PC-9 (cell line): ENCODE measurements at regions of chr19 and their contacts with region 1.

Region 1: GRCh38 chr19:52922841-52923777 is at the start of gene ZNF888:
- DNase-seq: peak; percentile 75 to 91
- H3K4me3 ChIP-seq: peak within 1 kb of the TSS; percentile 96
- H3K27ac ChIP-seq: peak within 1 kb of the TSS; percentile 82
- H3K4me1 ChIP-seq: 0 out of 2 replicates have a peak, but pooled peaks cover 6% of the 10 kb centered on the region
- H3K27me3 ChIP-seq: no peaks in the 10 kb centered on the region
- CTCF ChIP-seq: no peak
- total RNA-seq, gene ZNF888: 10.8 and 14.5 TPM in 2 replicates

Region 2: GRCh38 chr19:52722062-52723003 is 200.8 kb before region 1 on chr19:
- CTCF ChIA-PET with region 1: no interaction called
- POLR2A ChIA-PET with region 1: no interaction called
- intact Hi-C with region 1: no loop called
- DNase-seq: peak; percentile 76 to 96
- H3K4me3 ChIP-seq: no peak overlapping the region
- H3K27ac ChIP-seq: peak overlapping the region; percentile 61
- H3K4me1 ChIP-seq: peaks cover 11% of the 10 kb centered on the region
- H3K27me3 ChIP-seq: no peaks in the 10 kb centered on the region
- CTCF ChIP-seq: no peak

Region 3: DNA sequence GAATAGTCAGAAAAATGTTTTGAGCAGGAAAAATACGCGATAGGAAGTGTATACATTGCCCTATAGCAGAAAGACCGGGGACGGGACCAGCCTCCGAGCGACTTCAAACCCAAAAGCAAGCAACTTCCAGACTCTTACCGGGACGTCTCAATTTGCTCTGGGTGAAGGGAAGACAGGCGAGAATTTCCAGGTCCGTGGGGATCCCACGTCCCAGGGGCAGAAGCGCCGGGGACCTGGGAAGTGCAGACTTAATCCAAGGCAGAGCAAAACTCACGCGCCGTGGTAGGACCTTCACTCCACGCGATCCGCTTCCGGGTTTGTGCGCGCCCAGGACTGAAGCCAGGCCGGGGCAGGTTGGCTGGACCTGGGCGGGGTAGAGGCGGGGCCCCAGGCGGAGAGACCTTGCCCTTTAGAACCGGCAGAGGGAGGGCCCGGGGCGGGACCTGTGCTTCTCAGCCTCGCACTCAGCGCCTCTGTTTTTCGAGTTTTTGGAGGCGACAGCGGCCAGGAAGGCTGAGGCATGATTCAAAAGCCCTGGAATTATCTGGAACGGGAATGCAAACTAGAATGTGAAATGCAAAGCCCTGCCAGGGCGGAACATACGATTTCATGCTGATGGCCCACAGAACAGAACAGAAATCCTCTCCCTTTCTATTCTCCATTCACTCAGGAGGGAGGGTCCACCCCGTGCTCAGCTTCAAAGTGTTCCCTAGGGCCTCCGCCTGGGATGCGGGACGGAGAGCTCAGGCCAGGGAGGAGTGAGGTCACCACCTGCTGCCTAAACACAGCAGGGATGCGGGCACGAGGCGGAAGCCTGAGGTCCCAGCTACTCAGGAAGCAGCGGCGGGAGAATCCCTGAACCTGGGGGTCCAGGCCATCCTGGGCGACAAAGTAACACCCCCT is 136.4 kb before region 1 on chr19 and contains the start of gene ZNF600:
- CTCF ChIA-PET with region 1: no interaction called
- POLR2A ChIA-PET with region 1: no interaction called
- intact Hi-C with region 1: loop called (anchors 5 kb)
- DNase-seq: peak; percentile 73 to 85
- H3K4me3 ChIP-seq: peak within 1 kb of the TSS; percentile 99
- H3K27ac ChIP-seq: no peak within 1 kb of the TSS
- H3K4me1 ChIP-seq: peaks cover 6% of the 10 kb centered on the region; the same call in 1 of the 2 replicates
- H3K27me3 ChIP-seq: no peaks in the 10 kb centered on the region
- CTCF ChIP-seq: peak; percentile 36; the same call in 1 of the 2 replicates
- total RNA-seq, gene ZNF600: 21.4 and 27.9 TPM in 2 replicates

Region 4: GRCh38 chr19:52962394-52963246 is 39.5 kb after region 1 on chr19 and contains the start of gene ZNF816:
- CTCF ChIA-PET with region 1: interaction called, 3 read pairs
- POLR2A ChIA-PET with region 1: no interaction called
- intact Hi-C with region 1: loop called (anchors 2 kb)
- DNase-seq: peak; percentile 89 to 99
- H3K4me3 ChIP-seq: peak within 1 kb of the TSS; percentile 83
- H3K27ac ChIP-seq: peak within 1 kb of the TSS; percentile 32
- H3K4me1 ChIP-seq: peaks cover 15% of the 10 kb centered on the region
- H3K27me3 ChIP-seq: no peaks in the 10 kb centered on the region
- CTCF ChIP-seq: no peak
- total RNA-seq, gene ZNF816: 11.8 and 13.8 TPM in 2 replicates